Vagina (tissue), 2 donors: ENCODE measurements at regions of chr11 and their contacts with region 1.

Region 1: DNA sequence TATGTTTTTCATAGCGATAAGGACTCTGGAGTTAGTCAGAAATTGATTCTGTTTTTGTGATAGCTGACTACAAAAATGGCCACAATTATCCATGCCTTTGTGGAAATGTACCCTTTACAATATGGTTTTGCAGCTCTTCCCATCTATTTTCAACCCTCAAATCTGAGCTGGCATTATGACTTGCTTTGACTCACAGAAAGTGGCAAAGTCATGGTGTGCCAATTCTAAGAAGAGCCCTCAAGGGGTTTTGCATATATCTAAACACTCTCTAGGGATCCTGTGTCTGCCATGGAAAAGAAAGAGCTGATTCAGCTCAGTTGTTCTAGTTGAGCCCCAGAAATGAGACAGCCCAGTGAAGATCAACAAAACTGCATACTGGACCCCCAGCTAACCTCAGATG is 390.5 kb upstream of the RAG2 start:
- DNase-seq: no peak
- H3K4me3 ChIP-seq: no peak overlapping the region
- H3K27ac ChIP-seq: no peak overlapping the region
- H3K4me1 ChIP-seq: no peaks in the 10 kb centered on the region
- H3K27me3 ChIP-seq: no peaks in the 10 kb centered on the region
- CTCF ChIP-seq: no peak
- POLR2A ChIP-seq: no peak

Region 2: GRCh38 chr11:36899800-36900199 is 88.8 kb before region 1 on chr11:
- intact Hi-C with region 1: loop called (anchors 5 kb)
- DNase-seq: no peak
- H3K4me3 ChIP-seq: no peak overlapping the region
- H3K27ac ChIP-seq: no peak overlapping the region
- H3K4me1 ChIP-seq: no peaks in the 10 kb centered on the region
- H3K27me3 ChIP-seq: no peaks in the 10 kb centered on the region
- CTCF ChIP-seq: no peak
- POLR2A ChIP-seq: no peak

Region 3: GRCh38 chr11:37076866-37077265 is 88.3 kb after region 1 on chr11:
- intact Hi-C with region 1: no loop called
- DNase-seq: no peak
- H3K4me3 ChIP-seq: no peak overlapping the region
- H3K27ac ChIP-seq: no peak overlapping the region
- H3K4me1 ChIP-seq: no peaks in the 10 kb centered on the region
- H3K27me3 ChIP-seq: no peaks in the 10 kb centered on the region
- CTCF ChIP-seq: no peak
- POLR2A ChIP-seq: no peak

Region 4: DNA sequence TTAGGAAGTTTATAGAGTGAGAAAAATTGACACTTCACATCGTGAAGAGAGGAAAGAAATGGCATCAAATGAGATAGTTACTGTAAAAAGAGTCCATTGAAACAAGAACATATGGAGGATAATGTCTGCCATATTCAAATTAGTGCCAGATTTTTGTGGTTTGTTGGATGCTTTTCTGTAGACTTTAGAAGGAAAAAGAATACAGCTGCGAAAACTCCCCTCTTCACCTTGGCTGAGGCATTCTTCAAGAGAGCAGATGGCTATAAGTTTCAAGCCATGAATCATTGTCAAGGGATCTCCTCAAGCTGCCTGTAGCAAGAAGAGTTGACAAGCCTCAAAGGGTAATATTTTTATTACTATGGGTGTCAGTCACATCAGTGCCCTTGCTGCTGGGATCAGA is 116.9 kb after region 1 on chr11:
- intact Hi-C with region 1: no loop called
- DNase-seq: no peak
- H3K4me3 ChIP-seq: no peak overlapping the region
- H3K27ac ChIP-seq: no peak overlapping the region
- H3K4me1 ChIP-seq: no peaks in the 10 kb centered on the region
- H3K27me3 ChIP-seq: no peaks in the 10 kb centered on the region
- CTCF ChIP-seq: no peak
- POLR2A ChIP-seq: no peak